ENCODE measurements at regions of chr9 and their contacts with region 1.

Region 1: DNA sequence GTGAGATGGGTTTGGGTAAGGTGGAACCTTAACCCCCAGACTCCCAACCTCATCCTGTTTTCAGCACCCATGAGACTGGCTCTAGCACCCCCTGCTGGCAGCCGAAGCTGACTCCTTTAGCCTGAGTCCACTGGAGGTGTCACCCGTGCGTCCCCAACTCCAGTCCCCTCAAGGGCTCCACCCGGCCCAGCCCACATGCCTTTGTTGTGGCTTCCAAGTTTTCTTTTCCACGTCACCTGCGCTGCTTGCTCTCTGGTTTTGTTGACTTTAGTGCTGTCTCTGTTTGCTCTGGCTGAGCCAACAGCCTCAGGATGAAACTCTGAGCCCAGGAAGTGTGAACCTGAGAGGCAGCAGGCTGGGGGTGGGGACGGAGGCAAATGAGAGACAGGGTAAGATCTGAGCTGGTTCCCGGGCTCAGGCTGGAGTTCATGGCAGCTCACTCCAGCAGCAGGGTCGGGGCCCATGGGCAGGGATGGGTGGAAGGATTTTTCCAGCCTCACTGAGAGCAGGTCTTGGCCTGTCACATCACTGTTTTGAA is 13.2 kb upstream of the AQP7 start:
- DNase-seq: peak; percentile 93
- ATAC-seq: peak; percentile 96
- H3K4me3 Mint-ChIP-seq: no peak overlapping the region
- H3K27ac Mint-ChIP-seq: peak overlapping the region; percentile 85
- H3K4me1 Mint-ChIP-seq: peaks cover 42% of the 10 kb centered on the region
- H3K27me3 Mint-ChIP-seq: no peaks in the 10 kb centered on the region

Region 2: DNA sequence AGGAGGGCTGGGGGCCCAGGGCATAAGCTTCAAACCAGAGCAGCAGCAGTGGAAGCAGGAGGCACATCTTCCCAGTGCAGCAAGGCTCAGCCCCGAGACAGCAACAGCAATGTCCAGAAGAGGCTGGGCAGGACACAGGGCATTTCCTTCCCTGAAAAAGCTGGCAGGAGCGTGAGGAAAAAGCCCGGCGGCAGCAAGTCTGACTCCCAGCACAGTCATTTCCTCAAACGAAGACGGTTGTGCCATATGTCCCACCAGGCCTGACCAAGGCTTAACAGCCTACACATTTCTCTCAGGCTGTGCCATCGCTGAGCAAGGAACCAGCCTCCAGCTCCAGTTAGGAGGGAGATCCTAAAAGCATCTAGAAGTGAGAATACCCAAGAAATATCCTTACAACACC is 488.7 kb before region 1 on chr9:
- CTCF ChIA-PET with region 1: no interaction called
- DNase-seq: no peak
- ATAC-seq: no peak
- H3K4me3 Mint-ChIP-seq: no peak overlapping the region
- H3K27ac Mint-ChIP-seq: no peak overlapping the region
- H3K4me1 Mint-ChIP-seq: no peaks in the 10 kb centered on the region
- H3K27me3 Mint-ChIP-seq: peaks cover 5% of the 10 kb centered on the region

Region 3: GRCh38 chr9:33374634-33375213 is 40.8 kb before region 1 on chr9:
- CTCF ChIA-PET with region 1: interaction called, 54 read pairs
- DNase-seq: peak; percentile 78
- ATAC-seq: peak; percentile 81
- H3K4me3 Mint-ChIP-seq: no peak overlapping the region
- H3K27ac Mint-ChIP-seq: no peak overlapping the region
- H3K4me1 Mint-ChIP-seq: peaks cover 10% of the 10 kb centered on the region
- H3K27me3 Mint-ChIP-seq: no peaks in the 10 kb centered on the region

Region 4: DNA sequence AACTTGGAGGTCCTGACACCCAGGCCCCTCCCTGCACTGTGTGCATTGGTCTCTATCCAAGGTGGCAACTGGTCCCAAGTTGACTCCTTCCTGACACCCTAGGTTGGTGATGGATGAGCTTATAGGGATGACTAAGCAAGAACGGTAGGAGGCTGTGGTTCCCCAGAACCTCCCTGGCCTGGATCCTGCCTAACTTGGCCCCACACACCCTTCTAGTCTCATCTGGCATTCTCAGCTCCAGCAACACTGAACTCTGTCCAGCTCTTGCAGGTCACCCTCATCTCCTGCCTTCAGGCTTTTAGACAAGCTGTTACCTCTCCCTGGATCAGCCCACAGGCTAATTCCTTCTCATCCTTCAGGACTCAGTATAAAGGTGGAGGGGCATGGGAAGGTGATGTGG is 15.4 kb after region 1 on chr9:
- CTCF ChIA-PET with region 1: interaction called, 23 read pairs
- DNase-seq: no peak
- ATAC-seq: no peak
- H3K4me3 Mint-ChIP-seq: no peak overlapping the region
- H3K27ac Mint-ChIP-seq: no peak overlapping the region
- H3K4me1 Mint-ChIP-seq: peaks cover 5% of the 10 kb centered on the region
- H3K27me3 Mint-ChIP-seq: no peaks in the 10 kb centered on the region

Region 5: GRCh38 chr9:33446946-33447798 is 31.6 kb after region 1 on chr9 and contains the start of gene AQP3:
- CTCF ChIA-PET with region 1: interaction called, 135 read pairs
- DNase-seq: peak; percentile 84
- ATAC-seq: peak; percentile 71
- H3K4me3 Mint-ChIP-seq: peak within 1 kb of the TSS; percentile 78
- H3K27ac Mint-ChIP-seq: peak within 1 kb of the TSS; percentile 88
- H3K4me1 Mint-ChIP-seq: peaks cover 38% of the 10 kb centered on the region
- H3K27me3 Mint-ChIP-seq: no peaks in the 10 kb centered on the region
- total RNA-seq, gene AQP3: 2.8 to 10.4 TPM

Region 6: DNA sequence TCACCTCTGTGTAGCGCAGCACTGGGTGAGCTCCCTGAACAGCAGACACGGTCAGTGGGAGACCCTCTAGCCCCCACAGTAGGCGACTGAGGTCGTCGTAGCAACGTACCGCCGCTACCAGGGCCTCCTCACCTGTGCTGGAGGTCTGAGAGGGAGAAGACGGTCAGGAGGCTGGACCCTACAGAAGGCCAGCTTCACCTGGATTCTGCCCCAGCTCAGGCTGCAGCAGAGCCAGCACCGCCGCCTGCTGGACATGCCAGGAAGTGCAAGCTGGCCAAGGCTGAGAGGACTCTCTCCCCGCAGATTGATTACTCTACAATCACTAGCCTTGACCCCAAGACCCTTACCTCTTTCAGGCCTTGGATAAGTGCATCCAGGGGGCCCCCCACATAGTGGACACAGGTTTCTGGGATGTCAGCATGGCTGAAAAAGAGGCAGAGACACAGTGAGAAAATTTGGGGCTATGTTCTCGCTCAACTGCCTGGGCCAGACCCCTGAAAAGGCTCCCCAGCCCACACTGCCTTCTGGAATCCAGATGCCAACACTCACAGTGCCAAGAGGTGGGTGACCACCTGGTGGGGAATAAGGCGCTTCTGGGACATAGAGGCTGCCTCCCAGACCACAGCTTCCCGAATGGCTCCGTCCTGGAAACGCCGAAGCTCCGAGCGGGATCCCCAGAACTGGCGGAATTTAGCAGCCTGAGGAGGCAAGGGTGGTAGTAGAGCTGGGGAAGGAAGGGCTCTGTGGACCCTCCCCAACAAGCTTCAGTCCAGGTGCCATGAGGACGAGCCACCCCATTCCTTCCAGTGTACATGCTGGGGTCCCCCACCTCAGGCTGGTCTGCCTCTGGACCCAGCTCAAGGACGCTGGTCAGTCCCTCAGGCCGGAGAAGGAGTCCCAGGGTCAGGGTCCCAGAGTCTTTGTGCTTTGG is 51.3 kb after region 1 on chr9:
- CTCF ChIA-PET with region 1: interaction called, 55 read pairs
- DNase-seq: peak; percentile 78
- ATAC-seq: peak; percentile 81
- H3K4me3 Mint-ChIP-seq: no peak overlapping the region
- H3K27ac Mint-ChIP-seq: no peak overlapping the region
- H3K4me1 Mint-ChIP-seq: peaks cover 8% of the 10 kb centered on the region
- H3K27me3 Mint-ChIP-seq: no peaks in the 10 kb centered on the region